ENCODE measurements at regions of chr1 and their contacts with region 1.

Region 1: GRCh38 chr1:23979878-23980724 is at the start of gene SRSF10:
- DNase-seq: peak; percentile 98 to 99 (median 99)
- H3K4me3 ChIP-seq: peak within 1 kb of the TSS; percentile 97
- H3K27ac ChIP-seq: peak within 1 kb of the TSS; percentile 80 to 94
- H3K4me1 ChIP-seq: peaks cover 18% of the 10 kb centered on the region
- H3K27me3 ChIP-seq: no peaks in the 10 kb centered on the region
- CTCF ChIP-seq: peak in 2 of 3 donors; percentile 66 to 70
- EP300 ChIP-seq: peak; percentile 12
- POLR2A ChIP-seq: peak; percentile 100
- total RNA-seq, gene SRSF10: 86.4 to 130 (median 99.1) TPM

Region 2: GRCh38 chr1:24018611-24019580 is 38.8 kb after region 1 on chr1:
- intact Hi-C with region 1: loop called in 3 of 4 experiments (anchors 2 to 10 kb)
- DNase-seq: peak; percentile 97 to 99 (median 99)
- H3K4me3 ChIP-seq: no peak overlapping the region
- H3K27ac ChIP-seq: peak overlapping the region; percentile 83 to 86
- H3K4me1 ChIP-seq: peaks cover 28% of the 10 kb centered on the region
- H3K27me3 ChIP-seq: no peaks in the 10 kb centered on the region
- CTCF ChIP-seq: peak in 1 of 3 donors; percentile 23
- EP300 ChIP-seq: peak; percentile 76
- POLR2A ChIP-seq: no peak

Region 3: GRCh38 chr1:24027838-24028468 is 47.9 kb after region 1 on chr1:
- intact Hi-C with region 1: loop called in 1 of 4 experiments (anchors 10 kb)
- DNase-seq: no peak
- H3K4me3 ChIP-seq: no peak overlapping the region
- H3K27ac ChIP-seq: no peak overlapping the region
- H3K4me1 ChIP-seq: no peaks in the 10 kb centered on the region
- H3K27me3 ChIP-seq: no peaks in the 10 kb centered on the region
- CTCF ChIP-seq: peak in 2 of 3 donors; percentile 27 to 65
- EP300 ChIP-seq: no peak
- POLR2A ChIP-seq: no peak

Region 4: GRCh38 chr1:24070821-24071393 is 90.8 kb after region 1 on chr1:
- intact Hi-C with region 1: no loop called
- DNase-seq: peak; percentile 74 to 82 (median 78)
- H3K4me3 ChIP-seq: no peak overlapping the region
- H3K27ac ChIP-seq: no peak overlapping the region
- H3K4me1 ChIP-seq: no peaks in the 10 kb centered on the region
- H3K27me3 ChIP-seq: no peaks in the 10 kb centered on the region
- CTCF ChIP-seq: peak; percentile 82 to 86 (median 83)
- EP300 ChIP-seq: no peak
- POLR2A ChIP-seq: no peak